ENCODE measurements at regions of chr2 and their contacts with region 1.

Region 1: GRCh38 chr2:189729430-189729829 is 33.2 kb downstream of the OSGEPL1 start:
- DNase-seq: no peak
- ATAC-seq: no peak
- H3K4me3 ChIP-seq: no peak overlapping the region
- H3K4me3 Mint-ChIP-seq: no peak overlapping the region
- H3K27ac ChIP-seq: no peak overlapping the region
- H3K27ac Mint-ChIP-seq: no peak overlapping the region
- H3K4me1 ChIP-seq: no peaks in the 10 kb centered on the region
- H3K4me1 Mint-ChIP-seq: no peaks in the 10 kb centered on the region
- H3K27me3 ChIP-seq: no peaks in the 10 kb centered on the region
- H3K27me3 Mint-ChIP-seq: no peaks in the 10 kb centered on the region

Region 2: DNA sequence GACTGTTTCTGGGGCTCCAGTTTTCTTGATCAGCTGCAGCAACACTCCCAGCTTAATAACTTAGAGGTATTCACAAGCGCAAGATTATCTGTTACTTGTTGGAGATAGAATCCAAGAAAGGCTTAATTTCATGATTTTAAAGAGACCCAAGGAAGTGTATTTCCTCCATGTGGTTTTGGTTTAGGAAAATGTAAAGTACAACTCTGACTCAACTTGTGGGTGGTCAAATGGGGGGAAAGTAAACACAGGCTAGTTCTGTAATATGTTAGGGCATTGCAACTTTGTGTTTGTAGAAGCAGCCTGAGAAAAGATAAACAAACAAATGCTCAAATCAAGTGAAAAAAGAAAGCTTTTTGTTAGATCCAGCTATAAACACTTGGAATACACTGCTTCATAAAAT is 845.4 kb before region 1 on chr2:
- CTCF ChIA-PET with region 1: no interaction called
- POLR2A ChIA-PET with region 1: interaction called in 1 of 2 experiments, 11 read pairs
- DNase-seq: no peak
- ATAC-seq: no peak
- H3K4me3 ChIP-seq: no peak overlapping the region
- H3K4me3 Mint-ChIP-seq: no peak overlapping the region
- H3K27ac ChIP-seq: no peak overlapping the region
- H3K27ac Mint-ChIP-seq: no peak overlapping the region
- H3K4me1 ChIP-seq: no peaks in the 10 kb centered on the region
- H3K4me1 Mint-ChIP-seq: no peaks in the 10 kb centered on the region
- H3K27me3 ChIP-seq: no peaks in the 10 kb centered on the region
- H3K27me3 Mint-ChIP-seq: no peaks in the 10 kb centered on the region

Region 3: GRCh38 chr2:189685540-189686229 is 43.7 kb before region 1 on chr2:
- CTCF ChIA-PET with region 1: no interaction called
- POLR2A ChIA-PET with region 1: interaction called in 1 of 2 experiments, 11 read pairs
- DNase-seq: peak in 5 of 35 experiments; percentile 5 to 29 (median 8)
- ATAC-seq: peak in 3 of 4 experiments; percentile 30 to 35 (median 32)
- H3K4me3 ChIP-seq: no peak overlapping the region
- H3K4me3 Mint-ChIP-seq: no peak overlapping the region
- H3K27ac ChIP-seq: no peak overlapping the region
- H3K27ac Mint-ChIP-seq: no peak overlapping the region
- H3K4me1 ChIP-seq: peaks cover 0 to 6% of the 10 kb centered on the region in 2 experiments
- H3K4me1 Mint-ChIP-seq: peaks cover 13 to 27% (median 18%) of the 10 kb centered on the region in 3 donors
- H3K27me3 ChIP-seq: no peaks in the 10 kb centered on the region
- H3K27me3 Mint-ChIP-seq: no peaks in the 10 kb centered on the region

Region 4: GRCh38 chr2:189709501-189710221 is 19.8 kb before region 1 on chr2:
- CTCF ChIA-PET with region 1: no interaction called
- POLR2A ChIA-PET with region 1: no interaction called
- DNase-seq: no peak
- ATAC-seq: no peak
- H3K4me3 ChIP-seq: no peak overlapping the region
- H3K4me3 Mint-ChIP-seq: no peak overlapping the region
- H3K27ac ChIP-seq: no peak overlapping the region
- H3K27ac Mint-ChIP-seq: no peak overlapping the region
- H3K4me1 ChIP-seq: no peaks in the 10 kb centered on the region
- H3K4me1 Mint-ChIP-seq: no peaks in the 10 kb centered on the region
- H3K27me3 ChIP-seq: no peaks in the 10 kb centered on the region
- H3K27me3 Mint-ChIP-seq: no peaks in the 10 kb centered on the region

Region 5: GRCh38 chr2:189762551-189763298 is 33.3 kb after region 1 on chr2 and contains the start of gene OSGEPL1:
- CTCF ChIA-PET with region 1: no interaction called
- POLR2A ChIA-PET with region 1: no interaction called
- DNase-seq: peak; percentile 81 to 96 (median 92)
- ATAC-seq: peak; percentile 93 to 95 (median 94)
- H3K4me3 ChIP-seq: peak within 1 kb of the TSS; percentile 94 to 98
- H3K4me3 Mint-ChIP-seq: peak within 1 kb of the TSS; percentile 92 to 98 (median 93)
- H3K27ac ChIP-seq: peak within 1 kb of the TSS; percentile 95
- H3K27ac Mint-ChIP-seq: peak within 1 kb of the TSS; percentile 96 to 98
- H3K4me1 ChIP-seq: peaks cover 5 to 10% of the 10 kb centered on the region in 2 experiments
- H3K4me1 Mint-ChIP-seq: peaks cover 11 to 13% (median 11%) of the 10 kb centered on the region in 3 donors
- H3K27me3 ChIP-seq: no peaks in the 10 kb centered on the region
- H3K27me3 Mint-ChIP-seq: no peaks in the 10 kb centered on the region
- total RNA-seq, gene OSGEPL1: 5.5 to 15.3 (median 13.9) TPM